Posterior vena cava (tissue), 2 donors: ENCODE measurements at regions of chr1 and their contacts with region 1.

Region 1: GRCh38 chr1:226985839-226986463 is 45.9 kb downstream of the COQ8A start:
- DNase-seq: peak; percentile 70

Region 2: DNA sequence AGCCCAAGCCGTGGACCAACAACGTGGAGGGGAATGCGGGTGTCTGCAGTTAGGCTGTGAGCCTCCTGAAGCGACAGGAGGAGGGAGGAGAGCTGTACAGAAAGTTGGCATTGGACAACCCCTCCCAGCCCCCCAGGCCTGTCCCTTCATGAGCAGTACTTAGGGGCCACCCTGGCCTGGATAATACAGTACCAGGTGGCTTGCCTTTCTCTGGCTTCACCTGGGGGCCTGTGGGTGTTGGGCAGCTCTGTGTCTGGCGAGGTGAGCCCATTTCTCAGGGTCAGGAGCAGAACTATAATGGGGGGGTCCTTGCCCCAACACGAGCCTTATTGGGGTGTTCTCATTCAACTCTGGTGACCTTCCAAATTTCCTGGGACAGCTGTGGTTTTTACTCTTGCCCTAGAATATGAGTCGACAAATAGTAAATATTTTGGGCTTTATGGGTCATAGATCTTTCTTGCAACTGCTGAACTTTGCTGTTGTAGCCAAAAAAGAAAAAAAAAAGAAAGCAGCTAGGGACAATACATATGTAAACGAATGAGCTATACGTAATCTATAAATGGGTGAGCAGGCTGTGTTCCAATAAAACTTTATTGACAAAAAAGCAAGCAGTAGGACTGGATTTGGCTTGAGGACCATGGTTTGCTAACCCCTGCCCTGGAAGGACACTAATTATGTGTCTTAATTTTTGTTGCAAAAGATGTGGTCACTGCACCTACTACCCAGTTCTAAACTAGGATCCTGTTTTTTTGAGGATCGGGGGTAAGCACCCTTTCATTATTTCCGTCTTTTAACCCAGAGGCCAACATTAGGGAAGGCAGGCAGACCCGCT is 34.4 kb before region 1 on chr1:
- intact Hi-C with region 1: loop called in 1 of 2 experiments (anchors 2 kb)
- DNase-seq: no peak